Breast epithelium (tissue), 4 donors: ENCODE measurements at regions of chr21 and their contacts with region 1.

Region 1: DNA sequence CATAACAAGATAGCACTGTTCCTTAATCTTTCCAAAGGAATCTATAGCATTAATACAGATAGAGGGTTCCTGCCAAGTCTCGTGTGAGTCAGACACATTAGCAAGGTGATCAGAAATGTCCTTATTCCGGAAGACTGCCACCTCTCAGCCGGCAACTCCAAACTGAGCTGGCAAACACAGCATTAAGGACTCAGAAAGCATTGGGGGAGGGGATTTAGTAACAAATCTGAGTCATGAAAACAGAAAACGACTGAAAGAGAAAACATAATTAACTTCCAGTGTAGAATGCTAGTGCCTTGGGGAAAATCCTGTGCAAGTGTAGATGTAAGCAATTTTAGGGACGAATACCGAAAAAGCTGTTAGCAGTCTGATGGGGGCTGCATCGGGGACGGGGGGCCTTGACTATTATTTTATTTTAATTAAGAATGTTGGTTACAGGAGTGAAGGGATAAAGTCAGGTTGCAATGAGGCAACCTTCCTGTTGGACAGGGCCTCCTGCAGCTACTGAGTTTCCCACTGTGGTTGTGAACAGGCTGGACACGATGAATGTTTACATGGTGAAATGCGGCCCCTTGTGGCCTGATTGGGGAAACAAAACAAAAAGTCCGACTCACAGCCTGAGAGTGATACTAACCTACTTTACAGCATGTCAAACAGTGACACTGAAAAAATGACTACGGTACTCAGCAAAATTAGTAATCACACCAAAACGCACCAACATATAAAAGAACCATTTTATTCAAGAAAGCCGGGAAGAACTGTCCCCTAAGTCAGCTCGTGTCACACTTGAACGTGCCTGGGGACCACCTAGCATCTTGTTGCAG is 20.7 kb downstream of the MIS18A start:
- DNase-seq: peak; percentile 67 to 69
- H3K4me3 ChIP-seq: no peak overlapping the region
- H3K27ac ChIP-seq: no peak overlapping the region
- H3K4me1 ChIP-seq: no peaks in the 10 kb centered on the region
- H3K27me3 ChIP-seq: no peaks in the 10 kb centered on the region
- CTCF ChIP-seq: peak; percentile 59 to 90 (median 84)
- POLR2A ChIP-seq: no peak

Region 2: DNA sequence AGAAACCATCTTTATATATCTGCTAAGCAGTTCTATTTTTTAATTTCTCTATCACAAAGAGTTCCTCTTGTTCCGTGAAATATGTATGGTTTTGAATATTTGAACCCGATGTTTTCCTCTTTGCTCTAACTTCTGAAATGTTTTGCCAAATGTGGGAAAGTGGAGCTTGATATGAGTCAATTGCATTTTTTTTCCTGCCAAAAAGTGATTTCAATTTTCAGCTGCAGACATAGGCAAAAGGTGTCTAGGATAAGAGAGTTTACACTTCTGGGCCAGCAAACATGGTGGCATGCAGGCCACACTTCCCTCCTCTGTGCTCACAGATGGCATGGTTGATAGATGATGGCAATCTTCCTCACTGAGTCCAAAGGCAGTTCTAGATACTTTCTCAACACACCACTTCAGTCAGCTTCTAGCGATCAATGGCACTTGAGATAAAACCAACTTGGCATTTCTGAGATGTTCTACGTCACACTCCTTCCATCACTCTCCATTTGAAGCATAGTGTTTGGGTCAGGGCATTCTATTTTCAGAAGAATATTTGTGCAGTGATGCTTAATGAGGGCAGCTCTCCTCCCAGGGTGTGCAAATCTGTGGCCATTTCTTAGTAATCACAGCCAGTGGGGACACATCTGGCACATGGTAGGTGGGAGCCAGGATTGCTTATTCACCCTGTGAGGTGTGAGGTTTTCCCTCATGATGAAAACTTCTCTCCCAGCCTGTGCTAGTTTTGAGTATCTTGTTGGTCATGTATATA is 471.8 kb before region 1 on chr21:
- intact Hi-C with region 1: loop called (anchors 2 kb)
- DNase-seq: no peak
- H3K4me3 ChIP-seq: no peak overlapping the region
- H3K27ac ChIP-seq: no peak overlapping the region
- H3K4me1 ChIP-seq: no peaks in the 10 kb centered on the region
- H3K27me3 ChIP-seq: no peaks in the 10 kb centered on the region
- CTCF ChIP-seq: no peak
- POLR2A ChIP-seq: no peak

Region 3: GRCh38 chr21:31873696-31874599 is 384.2 kb before region 1 on chr21:
- intact Hi-C with region 1: loop called (anchors 5 kb)
- DNase-seq: no peak
- H3K4me3 ChIP-seq: peak overlapping the region; percentile 69 to 87 (median 69)
- H3K27ac ChIP-seq: peak overlapping the region; percentile 41 to 76
- H3K4me1 ChIP-seq: peaks cover 0 to 11% of the 10 kb centered on the region in 2 donors
- H3K27me3 ChIP-seq: peaks cover 0 to 3% of the 10 kb centered on the region in 2 donors
- CTCF ChIP-seq: peak in 2 of 3 donors; percentile 21 to 47
- POLR2A ChIP-seq: no peak

Region 4: GRCh38 chr21:32240851-32241687 is 17.1 kb before region 1 on chr21:
- intact Hi-C with region 1: no loop called
- DNase-seq: no peak
- H3K4me3 ChIP-seq: no peak overlapping the region
- H3K27ac ChIP-seq: no peak overlapping the region
- H3K4me1 ChIP-seq: no peaks in the 10 kb centered on the region
- H3K27me3 ChIP-seq: no peaks in the 10 kb centered on the region
- CTCF ChIP-seq: no peak
- POLR2A ChIP-seq: no peak

Region 5: DNA sequence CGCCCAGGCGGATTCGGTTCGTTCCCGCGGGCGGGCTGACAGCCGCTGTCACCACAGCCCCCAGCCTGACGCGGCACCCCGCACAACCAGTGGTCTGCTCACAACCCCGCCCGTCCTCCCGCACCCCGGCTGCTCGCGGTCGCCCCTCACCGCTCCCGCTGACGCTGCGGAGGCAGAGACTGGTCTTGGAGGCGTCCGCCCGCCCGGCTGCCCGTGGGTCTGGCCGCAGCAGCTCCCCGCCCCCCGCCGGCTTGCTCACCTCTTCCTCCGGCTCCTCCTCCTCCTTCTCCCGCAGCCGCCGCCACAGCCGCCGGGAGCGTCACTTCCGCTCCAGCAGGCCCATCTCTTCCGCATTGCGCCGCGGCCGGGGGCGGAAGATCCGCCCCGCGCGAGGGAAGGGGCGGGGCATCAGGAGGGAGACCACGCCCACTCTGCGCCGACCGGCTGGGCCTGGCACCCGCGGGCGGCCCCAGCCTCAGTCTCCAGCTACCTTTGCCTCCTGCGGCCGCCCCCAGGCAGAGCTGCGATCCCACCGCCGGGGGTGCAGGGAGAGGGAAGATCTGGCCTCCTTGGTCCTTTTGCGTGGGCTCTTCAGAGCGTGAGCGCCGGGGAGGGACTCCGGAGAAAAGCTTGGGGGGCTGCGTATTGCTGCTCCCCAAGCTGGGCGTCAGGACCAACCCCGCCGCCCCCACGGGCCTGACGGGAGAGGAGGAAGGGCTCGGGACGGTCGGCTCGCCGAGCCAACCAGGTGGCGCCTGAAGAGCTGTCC is 469.7 kb after region 1 on chr21 and contains the start of gene SYNJ1:
- intact Hi-C with region 1: no loop called
- DNase-seq: peak; percentile 91 to 94
- H3K4me3 ChIP-seq: peak within 1 kb of the TSS; percentile 75 to 96 (median 84)
- H3K27ac ChIP-seq: peak within 1 kb of the TSS; percentile 90
- H3K4me1 ChIP-seq: no peaks in the 10 kb centered on the region
- H3K27me3 ChIP-seq: no peaks in the 10 kb centered on the region
- CTCF ChIP-seq: no peak
- POLR2A ChIP-seq: peak; percentile 46
- total RNA-seq, gene SYNJ1: 8.2 to 13.9 (median 11.0) TPM